HEK293T (cell line): ENCODE measurements at regions of chr11 and their contacts with region 1.

Region 1: DNA sequence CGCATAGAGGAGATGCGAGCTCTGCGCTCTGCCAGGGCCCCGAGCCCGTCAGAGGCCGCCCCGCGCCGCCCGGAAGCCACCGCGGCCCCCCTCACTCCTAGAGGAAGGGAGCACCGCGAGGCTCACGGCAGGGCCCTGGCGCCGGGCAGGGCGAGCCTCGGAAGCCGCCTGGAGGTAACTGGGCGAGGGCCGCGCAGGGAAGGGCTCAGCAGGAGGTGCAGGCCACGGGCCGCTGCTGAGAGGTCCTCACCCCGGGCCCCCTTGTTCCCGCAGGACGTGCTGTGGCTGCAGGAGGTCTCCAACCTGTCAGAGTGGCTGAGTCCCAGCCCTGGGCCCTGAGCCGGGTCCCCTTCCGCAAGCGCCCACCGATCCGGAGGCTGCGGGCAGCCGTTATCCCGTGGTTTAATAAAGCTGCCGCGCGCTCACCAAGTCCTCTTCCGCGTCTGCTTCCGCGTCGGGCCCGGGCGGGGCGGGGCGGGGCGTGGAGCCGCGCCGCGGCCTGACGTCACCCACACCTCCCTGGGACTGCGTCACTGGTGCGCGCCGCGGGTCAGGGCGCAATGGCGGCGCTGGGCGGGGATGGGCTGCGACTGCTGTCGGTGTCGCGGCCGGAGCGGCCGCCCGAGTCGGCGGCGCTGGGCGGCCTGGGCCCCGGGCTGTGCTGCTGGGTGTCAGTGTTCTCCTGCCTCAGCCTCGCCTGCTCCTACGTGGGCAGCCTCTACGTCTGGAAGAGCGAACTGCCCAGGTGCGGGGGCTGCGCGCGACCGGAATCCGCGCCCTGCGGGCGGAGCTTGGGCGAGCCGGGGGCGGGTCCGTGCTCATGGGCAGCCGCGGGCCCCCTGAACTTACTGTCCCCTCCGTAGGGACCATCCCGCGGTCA is at the start of gene RCE1:
- DNase-seq: peak; percentile 96

Region 2: GRCh38 chr11:66670816-66671215 is 172.3 kb before region 1 on chr11:
- CTCF ChIA-PET with region 1: no interaction called
- POLR2A ChIA-PET with region 1: no interaction called
- DNase-seq: no peak

Region 3: GRCh38 chr11:66855574-66856495 is 12.7 kb after region 1 on chr11:
- CTCF ChIA-PET with region 1: interaction called, 3 read pairs
- POLR2A ChIA-PET with region 1: interaction called, 63 read pairs
- DNase-seq: peak; percentile 92

Region 4: GRCh38 chr11:66883016-66883968 is 40.2 kb after region 1 on chr11:
- CTCF ChIA-PET with region 1: no interaction called
- POLR2A ChIA-PET with region 1: interaction called, 29 read pairs
- DNase-seq: peak; percentile 80